GM10248 (cell line): ENCODE measurements at regions of chr15 and their contacts with region 1.

Region 1: GRCh38 chr15:48352474-48353072 is 21.3 kb downstream of the DUT start:
- DNase-seq: peak; percentile 64
- CTCF ChIP-seq: peak; percentile 83

Region 2: GRCh38 chr15:47196057-47196456 is 1156.5 kb before region 1 on chr15:
- CTCF ChIA-PET with region 1: interaction called, 12 read pairs
- POLR2A ChIA-PET with region 1: no interaction called
- DNase-seq: peak; percentile 37
- CTCF ChIP-seq: peak; percentile 92

Region 3: DNA sequence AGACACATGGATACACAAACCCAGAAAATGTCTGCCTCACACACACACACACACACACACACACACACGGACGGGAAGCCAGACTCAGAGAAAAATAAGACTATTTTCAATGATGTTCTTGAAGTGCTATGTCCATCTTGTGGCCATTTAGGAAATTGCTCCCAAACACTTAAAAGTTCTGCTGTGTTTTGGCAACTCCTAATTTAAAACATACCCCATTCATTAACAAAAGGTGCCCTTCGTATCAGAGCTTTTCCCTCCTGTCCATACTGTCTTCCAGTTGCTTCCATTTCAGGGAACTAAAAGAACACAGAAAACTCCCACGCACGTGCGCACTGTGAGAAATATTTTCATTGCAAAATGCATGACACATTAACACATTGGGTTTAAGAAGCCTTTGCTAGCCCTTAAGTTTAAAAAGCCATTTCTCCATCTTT is 101.9 kb before region 1 on chr15:
- CTCF ChIA-PET with region 1: no interaction called
- POLR2A ChIA-PET with region 1: no interaction called
- DNase-seq: peak; percentile 52
- CTCF ChIP-seq: peak; percentile 58

Region 4: DNA sequence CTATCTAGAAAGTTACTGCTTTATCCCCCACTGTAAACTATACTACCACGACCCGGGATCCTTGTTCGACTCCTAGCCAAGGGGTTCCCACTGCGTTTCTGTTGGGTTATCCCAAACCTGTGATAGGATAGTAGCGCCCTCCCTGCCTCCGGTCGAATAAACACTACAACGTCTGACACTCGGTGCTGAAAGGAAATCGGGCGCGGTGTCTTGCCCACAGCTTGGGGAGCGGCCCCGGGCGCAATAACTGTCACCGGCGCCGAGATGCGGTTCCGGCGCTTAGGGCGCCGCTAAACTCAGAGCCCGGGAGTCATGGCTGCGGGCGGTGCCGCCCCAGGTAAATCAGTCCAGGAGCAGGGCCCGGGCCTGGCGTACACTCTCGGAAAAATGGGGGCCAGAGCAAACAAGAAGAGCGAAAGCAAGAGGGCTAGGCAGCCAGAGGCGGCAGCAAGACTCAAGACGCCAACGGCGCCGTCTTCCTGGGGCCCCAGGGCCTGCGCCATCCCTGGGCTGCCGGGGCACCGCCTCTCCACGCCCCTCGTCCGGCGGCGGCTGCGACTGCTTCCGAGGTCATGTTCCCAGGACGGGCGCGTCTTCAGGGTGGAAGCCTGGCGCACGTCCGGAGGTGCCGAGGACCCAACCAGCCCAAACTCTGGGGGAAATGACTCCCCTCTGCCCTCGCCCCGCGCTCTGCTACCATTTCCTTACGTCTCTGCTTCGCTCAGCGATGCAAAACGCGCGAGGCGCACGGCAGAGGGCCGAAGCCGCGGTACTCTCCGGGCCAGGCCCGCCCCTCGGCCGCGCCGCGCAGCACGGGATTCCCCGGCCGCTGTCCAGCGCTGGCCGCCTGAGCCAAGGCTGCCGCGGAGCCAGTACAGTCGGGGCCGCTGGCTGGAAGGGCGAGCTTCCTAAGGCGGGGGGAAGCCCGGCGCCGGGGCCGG is 21.4 kb before region 1 on chr15 and contains the start of gene DUT:
- CTCF ChIA-PET with region 1: interaction called, 34 read pairs
- POLR2A ChIA-PET with region 1: no interaction called
- DNase-seq: peak; percentile 83
- CTCF ChIP-seq: no peak

Region 5: DNA sequence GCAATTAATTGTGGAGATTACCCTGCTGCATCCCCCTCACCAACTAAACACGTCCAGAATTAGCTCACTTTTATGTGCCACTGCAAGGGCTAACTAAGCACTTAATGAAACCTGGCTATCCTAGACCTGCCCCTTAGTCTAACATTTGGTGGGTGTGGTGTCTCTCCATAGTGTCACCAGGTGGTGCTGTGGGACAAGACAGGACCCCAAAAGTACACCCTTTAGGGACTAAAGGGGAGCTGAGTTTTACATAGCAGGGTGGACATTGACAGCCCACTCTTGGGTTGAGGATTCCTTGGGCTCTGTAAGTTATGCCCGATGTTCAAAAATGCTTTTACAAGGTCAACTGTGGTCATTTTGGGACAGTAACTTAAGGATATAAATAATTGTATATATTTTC is 15.6 kb before region 1 on chr15:
- CTCF ChIA-PET with region 1: interaction called, 34 read pairs
- POLR2A ChIA-PET with region 1: no interaction called
- DNase-seq: no peak
- CTCF ChIP-seq: peak; percentile 22

Region 6: GRCh38 chr15:48370460-48370859 is 17.9 kb after region 1 on chr15:
- CTCF ChIA-PET with region 1: interaction called, 16 read pairs
- POLR2A ChIA-PET with region 1: no interaction called
- DNase-seq: no peak
- CTCF ChIP-seq: no peak

Region 7: GRCh38 chr15:48507416-48508065 is 155.0 kb after region 1 on chr15:
- CTCF ChIA-PET with region 1: no interaction called
- POLR2A ChIA-PET with region 1: no interaction called
- DNase-seq: peak; percentile 39
- CTCF ChIP-seq: peak; percentile 63

Region 8: DNA sequence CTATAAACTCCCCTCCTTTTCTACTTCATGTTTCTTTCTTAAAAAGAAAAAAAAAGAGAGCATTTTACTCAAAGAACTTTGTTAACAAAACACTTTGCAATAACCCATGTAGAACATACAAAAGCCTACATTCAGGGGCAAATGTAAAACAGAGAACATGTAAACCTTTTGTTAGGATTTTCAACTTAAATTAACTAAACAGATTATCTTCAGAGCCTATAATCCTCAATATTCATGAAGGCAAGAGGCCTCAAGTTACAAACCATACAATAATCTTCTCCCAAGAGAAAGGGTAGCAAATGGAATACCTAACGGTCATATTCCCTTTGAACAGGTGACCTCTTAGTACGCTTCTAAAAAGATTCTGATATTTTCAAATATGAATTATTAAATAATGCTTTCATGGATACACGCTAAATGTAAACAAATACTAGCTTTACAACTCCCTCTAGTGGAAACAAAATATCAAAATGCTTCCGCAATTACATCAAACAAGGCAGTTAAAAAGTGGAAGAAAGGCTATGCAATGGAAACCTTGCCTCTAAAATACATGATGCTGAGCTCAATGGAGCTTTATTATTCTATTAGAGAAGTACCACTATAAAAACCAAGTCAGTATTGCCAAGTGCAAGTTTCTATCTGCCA is 448.4 kb after region 1 on chr15:
- CTCF ChIA-PET with region 1: interaction called, 13 read pairs
- POLR2A ChIA-PET with region 1: no interaction called
- DNase-seq: no peak
- CTCF ChIP-seq: peak; percentile 29